ENCODE measurements at regions of chr10 and their contacts with region 1.

Region 1: DNA sequence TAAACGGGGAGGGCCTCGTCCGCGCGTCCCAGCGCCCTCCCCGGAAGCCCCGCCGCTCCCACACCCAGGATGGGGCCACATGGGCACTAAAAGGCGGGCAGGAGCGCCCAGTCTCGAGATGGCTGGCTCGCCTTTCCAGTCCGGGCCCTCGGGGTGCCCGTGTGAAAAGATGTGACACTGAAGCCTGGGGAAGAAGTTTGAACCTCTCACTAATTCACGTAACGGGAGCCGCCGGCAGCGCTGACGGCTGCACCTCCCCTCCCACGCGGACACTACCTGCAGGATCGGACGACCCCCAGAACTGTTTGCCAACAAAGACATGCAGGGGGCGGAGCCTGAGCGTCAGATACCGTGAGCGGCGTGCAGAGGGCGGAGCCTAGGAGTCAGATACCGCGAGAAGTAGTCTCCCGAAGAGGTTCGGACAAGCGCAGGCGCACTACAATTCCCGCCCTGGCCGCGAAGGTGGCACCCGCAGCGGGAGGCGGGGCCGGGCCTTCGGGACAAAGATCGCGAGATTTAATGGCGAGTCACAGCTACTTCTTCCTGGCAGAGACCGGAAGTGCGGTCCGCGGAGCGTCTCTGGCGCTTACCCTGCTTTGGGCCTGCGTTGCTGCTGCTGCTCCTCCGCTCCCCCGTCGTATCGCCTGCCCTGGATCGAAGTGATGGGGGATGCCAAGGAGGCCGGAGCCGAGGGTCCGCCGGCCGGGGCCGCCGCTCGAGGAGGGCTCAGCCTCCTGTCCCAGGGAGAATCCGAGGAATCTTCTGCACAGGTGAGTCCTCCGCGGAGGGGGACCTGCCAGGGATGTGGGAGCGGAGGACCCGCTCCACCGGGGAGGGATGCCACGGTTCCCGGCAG is at the start of gene EDRF1:
- DNase-seq: peak; percentile 96 to 100
- H3K4me3 ChIP-seq: peak within 1 kb of the TSS; percentile 93 to 94
- H3K27ac ChIP-seq: peak within 1 kb of the TSS; percentile 85 to 95
- H3K4me1 ChIP-seq: peaks cover 3 to 13% of the 10 kb centered on the region in 2 donors
- H3K27me3 ChIP-seq: no peaks in the 10 kb centered on the region
- CTCF ChIP-seq: no peak
- total RNA-seq, gene EDRF1: 0.53 TPM

Region 2: DNA sequence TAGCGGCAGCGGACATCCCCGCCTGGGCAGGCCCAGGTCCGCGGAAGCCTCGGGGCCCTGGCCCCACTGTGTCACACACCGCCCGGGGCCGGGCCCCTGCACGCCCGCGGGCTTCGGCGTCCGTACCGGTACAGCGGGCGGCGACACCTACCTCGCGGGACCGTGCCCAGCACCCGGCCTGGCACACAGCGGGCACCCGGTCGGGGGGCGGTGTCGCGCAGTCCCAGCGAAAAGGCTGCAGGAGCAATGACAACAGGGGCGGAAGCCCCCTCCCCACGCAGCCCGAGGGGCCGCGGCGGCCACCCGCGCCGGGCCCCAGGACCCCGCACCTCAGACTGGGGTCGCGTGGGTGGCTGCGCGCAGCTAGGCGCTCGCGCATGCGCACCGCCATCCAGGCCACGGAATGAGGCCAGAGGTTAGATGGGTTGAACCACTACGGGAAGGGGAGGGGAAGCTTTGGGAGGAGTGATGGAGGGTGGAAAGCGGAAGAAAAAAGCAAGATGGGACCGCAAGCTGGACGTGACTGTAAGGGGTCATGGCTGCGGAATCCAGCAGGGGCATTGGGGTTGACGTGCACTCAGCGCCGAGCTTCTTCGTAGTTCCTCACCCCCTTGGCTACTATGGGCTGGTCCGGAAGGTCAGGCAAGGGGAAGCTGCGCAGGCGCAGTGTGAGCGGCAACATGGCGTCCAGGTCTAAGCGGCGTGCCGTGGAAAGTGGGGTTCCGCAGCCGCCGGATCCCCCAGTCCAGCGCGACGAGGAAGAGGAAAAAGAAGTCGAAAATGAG is 103.7 kb after region 1 on chr10 and contains the starts of genes BCCIP and UROS:
- intact Hi-C with region 1: loop called (anchors 2 kb)
- DNase-seq: peak; percentile 56 to 93
- H3K4me3 ChIP-seq: peak within 1 kb of the TSS; percentile 76 to 81
- H3K27ac ChIP-seq: peak within 1 kb of the TSS; percentile 79 to 81
- H3K4me1 ChIP-seq: peaks cover 9 to 19% of the 10 kb centered on the region in 2 donors
- H3K27me3 ChIP-seq: no peaks in the 10 kb centered on the region
- CTCF ChIP-seq: peak in 1 of 3 experiments; percentile 8
- total RNA-seq, gene BCCIP: 4.7 TPM
- total RNA-seq, gene UROS: 38.1 TPM